ENCODE measurements at regions of chr6 and their contacts with region 1.

Region 1: GRCh38 chr6:118709859-118710350 is 58.5 kb upstream of the CEP85L start:
- DNase-seq: no peak
- ATAC-seq: peak in 2 of 4 donors; percentile 12
- H3K4me3 ChIP-seq: peak overlapping the region in 9 of 12 donors; percentile 32 to 58 (median 40)
- H3K27ac ChIP-seq: peak overlapping the region in 8 of 12 donors; percentile 23 to 86 (median 57)
- H3K4me1 ChIP-seq: peaks cover 0 to 47% (median 23%) of the 10 kb centered on the region in 12 donors
- H3K27me3 ChIP-seq: no peaks in the 10 kb centered on the region
- CTCF ChIP-seq: no peak
- POLR2A ChIP-seq: no peak

Region 2: GRCh38 chr6:118535176-118535844 is 174.6 kb before region 1 on chr6:
- intact Hi-C with region 1: no loop called
- DNase-seq: no peak
- ATAC-seq: no peak
- H3K4me3 ChIP-seq: no peak overlapping the region
- H3K27ac ChIP-seq: peak overlapping the region in 5 of 12 donors; percentile 12 to 76 (median 30)
- H3K4me1 ChIP-seq: peaks cover 0 to 36% (median 7%) of the 10 kb centered on the region in 12 donors
- H3K27me3 ChIP-seq: no peaks in the 10 kb centered on the region
- CTCF ChIP-seq: no peak
- POLR2A ChIP-seq: no peak

Region 3: DNA sequence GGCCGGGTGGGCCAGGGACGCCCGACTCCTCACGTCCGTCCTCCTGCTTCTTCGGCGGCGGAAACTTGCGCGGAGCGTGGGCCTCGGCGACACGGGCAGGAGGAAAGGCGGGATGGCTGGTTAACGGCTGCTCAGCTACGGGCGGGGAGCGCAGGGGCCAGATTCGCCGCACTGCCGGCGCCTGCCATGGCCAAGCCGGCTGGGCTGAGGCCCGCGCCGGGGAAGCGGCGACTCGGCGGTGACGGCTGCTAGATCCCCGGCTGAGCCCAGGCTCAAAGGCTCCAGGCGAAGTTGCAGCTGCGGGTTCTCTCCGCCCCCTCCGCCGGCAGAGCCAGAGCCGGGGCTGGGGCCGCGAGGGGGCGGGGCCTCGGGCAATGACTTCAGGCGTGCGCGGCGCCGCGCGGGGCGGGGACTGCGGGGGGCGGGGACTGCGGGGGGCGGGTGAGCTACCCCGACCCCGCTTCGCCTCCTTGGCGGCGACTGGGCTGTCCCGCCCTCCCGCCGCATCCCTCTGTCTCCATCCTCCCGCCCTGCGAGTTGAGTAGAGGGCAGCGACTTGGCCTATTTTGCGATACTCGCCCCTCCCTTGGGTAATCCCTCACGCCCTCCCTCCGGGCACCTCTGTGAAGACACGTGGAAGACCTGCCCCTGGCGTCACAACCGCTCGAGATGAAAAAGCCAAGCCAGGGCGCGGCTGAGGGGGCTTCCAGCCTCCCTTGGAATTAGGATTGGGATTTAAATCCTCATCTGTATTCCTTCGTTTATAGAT is 58.4 kb before region 1 on chr6 and contains the start of gene CEP85L:
- intact Hi-C with region 1: loop called in 6 of 10 experiments (anchors 2 to 10 kb)
- DNase-seq: peak; percentile 93 to 96 (median 94)
- ATAC-seq: peak; percentile 95 to 99 (median 98)
- H3K4me3 ChIP-seq: peak within 1 kb of the TSS; percentile 69 to 98 (median 93)
- H3K27ac ChIP-seq: peak within 1 kb of the TSS; percentile 86 to 99 (median 96)
- H3K4me1 ChIP-seq: peaks cover 5 to 30% (median 13%) of the 10 kb centered on the region in 12 donors
- H3K27me3 ChIP-seq: no peaks in the 10 kb centered on the region
- CTCF ChIP-seq: peak in 1 of 12 donors; percentile 5
- POLR2A ChIP-seq: peak; percentile 38 to 91
- total RNA-seq, gene CEP85L: 5.1 to 14.4 (median 7.6) TPM

Region 4: DNA sequence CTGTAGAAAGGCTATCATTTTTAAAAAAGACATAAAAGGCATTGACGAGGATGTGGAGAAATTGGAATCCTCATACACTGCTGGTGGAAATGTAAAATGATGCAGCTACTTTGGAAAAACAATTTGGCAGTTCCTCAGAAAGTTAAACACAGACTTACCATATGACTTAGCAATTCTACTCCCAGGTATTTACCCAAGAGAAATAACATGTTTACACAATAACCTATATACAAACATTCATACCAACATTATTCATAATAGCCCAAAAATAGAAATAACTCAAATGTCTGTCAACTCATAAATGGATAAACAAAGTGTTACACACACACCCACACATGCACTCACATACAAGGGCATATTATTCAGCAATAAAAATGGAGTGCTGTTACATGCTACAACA is 35.1 kb before region 1 on chr6:
- intact Hi-C with region 1: loop called in 1 of 10 experiments (anchors 5 kb)
- DNase-seq: no peak
- ATAC-seq: no peak
- H3K4me3 ChIP-seq: no peak overlapping the region
- H3K27ac ChIP-seq: no peak overlapping the region
- H3K4me1 ChIP-seq: peaks cover 0 to 4% (median 0%) of the 10 kb centered on the region in 12 donors
- H3K27me3 ChIP-seq: no peaks in the 10 kb centered on the region
- CTCF ChIP-seq: no peak
- POLR2A ChIP-seq: no peak

Region 5: GRCh38 chr6:118744261-118744941 is 34.5 kb after region 1 on chr6:
- intact Hi-C with region 1: loop called in 1 of 10 experiments (anchors 5 kb)
- DNase-seq: no peak
- ATAC-seq: peak in 3 of 4 donors; percentile 20 to 62 (median 39)
- H3K4me3 ChIP-seq: no peak overlapping the region
- H3K27ac ChIP-seq: no peak overlapping the region
- H3K4me1 ChIP-seq: peaks cover 0 to 41% (median 6%) of the 10 kb centered on the region in 12 donors
- H3K27me3 ChIP-seq: no peaks in the 10 kb centered on the region
- CTCF ChIP-seq: no peak
- POLR2A ChIP-seq: no peak

Region 6: GRCh38 chr6:118776607-118777549 is 67.0 kb after region 1 on chr6:
- intact Hi-C with region 1: loop called in 1 of 10 experiments (anchors 2 kb)
- DNase-seq: peak in 4 of 5 donors; percentile 33 to 61 (median 56)
- ATAC-seq: peak; percentile 51 to 81 (median 76)
- H3K4me3 ChIP-seq: peak overlapping the region in 6 of 12 donors; percentile 9 to 32 (median 30)
- H3K27ac ChIP-seq: no peak overlapping the region
- H3K4me1 ChIP-seq: peaks cover 0 to 26% (median 5%) of the 10 kb centered on the region in 12 donors
- H3K27me3 ChIP-seq: no peaks in the 10 kb centered on the region
- CTCF ChIP-seq: peak; percentile 66 to 85 (median 75)
- POLR2A ChIP-seq: no peak

Region 7: GRCh38 chr6:118890997-118891790 is 181.3 kb after region 1 on chr6:
- intact Hi-C with region 1: no loop called
- DNase-seq: no peak
- ATAC-seq: no peak
- H3K4me3 ChIP-seq: peak overlapping the region in 1 of 12 donors; percentile 2
- H3K27ac ChIP-seq: peak overlapping the region in 1 of 12 donors; percentile 98
- H3K4me1 ChIP-seq: peaks cover 0 to 38% (median 15%) of the 10 kb centered on the region in 12 donors
- H3K27me3 ChIP-seq: no peaks in the 10 kb centered on the region
- CTCF ChIP-seq: no peak
- POLR2A ChIP-seq: no peak